PC-9 (cell line): ENCODE measurements at regions of chr3 and their contacts with region 1.

Region 1: DNA sequence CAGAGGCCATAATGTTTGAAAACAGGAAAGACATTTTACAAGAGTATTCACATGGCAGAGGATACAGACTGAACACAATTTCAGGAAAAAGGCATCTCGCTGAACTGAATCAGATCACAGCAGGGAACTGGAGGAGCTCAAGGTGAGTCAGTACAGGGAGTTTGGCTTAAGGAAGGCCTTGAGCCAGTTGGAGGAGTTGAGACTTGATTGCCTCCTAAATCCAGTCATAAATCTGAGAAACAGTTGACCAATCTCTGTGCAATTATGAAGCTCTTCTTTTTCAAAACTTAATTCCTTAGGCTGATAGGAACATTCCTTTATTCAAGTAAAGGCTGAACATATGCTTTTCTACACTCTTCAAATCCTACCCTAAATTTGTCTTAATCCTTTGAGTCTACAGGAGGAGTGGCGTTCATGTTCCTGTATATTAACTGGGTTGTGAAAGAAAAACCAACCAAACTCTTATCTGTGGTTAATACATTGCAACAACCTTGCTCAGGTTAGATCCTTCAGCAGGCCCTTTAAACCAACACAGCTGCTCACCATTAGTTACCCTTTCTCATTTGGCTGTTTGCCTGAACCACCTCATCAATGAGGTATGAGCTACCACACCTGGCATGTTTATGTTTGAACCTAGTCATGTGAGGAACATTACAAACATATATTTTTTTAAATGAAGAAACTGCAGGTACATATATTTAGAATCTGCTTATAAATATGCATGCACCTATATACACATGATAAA is 404.1 kb upstream of the ATP11B start:
- DNase-seq: peak; percentile 40 to 97
- H3K4me3 ChIP-seq: no peak overlapping the region
- H3K27ac ChIP-seq: peak overlapping the region; percentile 29
- H3K4me1 ChIP-seq: peaks cover 22% of the 10 kb centered on the region
- H3K27me3 ChIP-seq: no peaks in the 10 kb centered on the region
- CTCF ChIP-seq: no peak

Region 2: DNA sequence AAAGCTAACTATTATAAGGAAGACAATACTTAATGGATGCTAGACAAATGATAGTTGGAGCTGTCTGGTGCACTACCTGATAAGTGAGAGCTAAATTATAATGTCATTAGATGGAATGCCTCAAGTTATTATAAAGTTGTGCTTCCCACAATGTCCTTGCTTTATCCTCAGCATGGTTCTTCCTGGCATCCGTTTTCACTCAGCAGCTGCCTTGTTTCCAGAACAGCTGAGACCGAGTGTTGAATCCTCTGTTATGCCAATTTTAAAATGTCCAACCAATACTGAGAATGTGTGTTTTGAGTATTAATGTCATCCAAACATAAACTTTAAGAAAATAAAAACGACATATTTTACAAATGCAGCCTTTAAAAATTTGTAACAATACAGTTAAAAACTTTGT is 964.2 kb before region 1 on chr3:
- CTCF ChIA-PET with region 1: no interaction called
- POLR2A ChIA-PET with region 1: no interaction called
- intact Hi-C with region 1: no loop called
- DNase-seq: no peak
- H3K4me3 ChIP-seq: no peak overlapping the region
- H3K27ac ChIP-seq: no peak overlapping the region
- H3K4me1 ChIP-seq: no peaks in the 10 kb centered on the region
- H3K27me3 ChIP-seq: no peaks in the 10 kb centered on the region
- CTCF ChIP-seq: no peak

Region 3: DNA sequence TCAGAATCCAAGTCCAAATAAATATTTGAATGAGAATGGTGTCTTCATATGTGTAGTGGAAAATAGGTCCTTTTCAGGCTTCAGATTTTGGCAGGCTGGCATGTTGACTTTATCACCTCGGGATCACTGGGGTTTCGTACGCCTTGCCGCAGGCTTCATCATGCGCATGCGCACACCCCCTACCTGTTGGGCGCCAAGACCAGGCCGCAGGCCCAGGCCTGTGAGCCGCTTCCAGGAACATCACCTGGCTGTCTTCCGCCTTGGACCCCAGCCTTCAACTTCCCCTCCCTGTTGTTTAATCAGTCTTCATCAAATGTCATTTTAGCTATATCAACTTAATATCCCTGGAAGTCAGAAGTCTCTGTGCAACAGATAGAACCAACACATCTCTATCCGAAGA is 342.9 kb before region 1 on chr3:
- CTCF ChIA-PET with region 1: no interaction called
- POLR2A ChIA-PET with region 1: no interaction called
- intact Hi-C with region 1: no loop called
- DNase-seq: no peak
- H3K4me3 ChIP-seq: no peak overlapping the region
- H3K27ac ChIP-seq: no peak overlapping the region
- H3K4me1 ChIP-seq: no peaks in the 10 kb centered on the region
- H3K27me3 ChIP-seq: no peaks in the 10 kb centered on the region
- CTCF ChIP-seq: no peak

Region 4: GRCh38 chr3:182412065-182412464 is 22.8 kb after region 1 on chr3:
- CTCF ChIA-PET with region 1: no interaction called
- POLR2A ChIA-PET with region 1: no interaction called
- intact Hi-C with region 1: loop called (anchors 1 kb)
- DNase-seq: peak; percentile 67 to 95
- H3K4me3 ChIP-seq: no peak overlapping the region
- H3K27ac ChIP-seq: peak overlapping the region; percentile 50
- H3K4me1 ChIP-seq: peaks cover 15% of the 10 kb centered on the region
- H3K27me3 ChIP-seq: no peaks in the 10 kb centered on the region
- CTCF ChIP-seq: no peak